ENCODE measurements at regions of chr11 and their contacts with region 1.

Region 1: GRCh38 chr11:63838678-63839507 is at the start of gene MARK2:
- DNase-seq: peak; percentile 99 to 100 (median 99)
- ATAC-seq: peak; percentile 93
- H3K4me3 ChIP-seq: peak within 1 kb of the TSS; percentile 87
- H3K4me3 Mint-ChIP-seq: peak within 1 kb of the TSS; percentile 86 to 99 (median 92)
- H3K27ac ChIP-seq: peak within 1 kb of the TSS; percentile 94
- H3K27ac Mint-ChIP-seq: peak within 1 kb of the TSS; percentile 74 to 97 (median 88)
- H3K4me1 ChIP-seq: peaks cover 32 to 35% of the 10 kb centered on the region in 2 donors
- H3K4me1 Mint-ChIP-seq: peaks cover 44 to 57% (median 54%) of the 10 kb centered on the region in 7 donors
- H3K27me3 ChIP-seq: no peaks in the 10 kb centered on the region
- H3K27me3 Mint-ChIP-seq: no peaks in the 10 kb centered on the region
- total RNA-seq, gene MARK2: 42.3 to 69.1 (median 56.8) TPM

Region 2: GRCh38 chr11:61967116-61967923 is 1871.6 kb before region 1 on chr11 and contains the start of gene FTH1:
- CTCF ChIA-PET with region 1: no interaction called
- POLR2A ChIA-PET with region 1: no interaction called
- intact Hi-C with region 1: loop called in 1 of 2 experiments (anchors 5 kb)
- DNase-seq: peak; percentile 87 to 96 (median 92)
- ATAC-seq: peak; percentile 81
- H3K4me3 ChIP-seq: peak within 1 kb of the TSS; percentile 91
- H3K4me3 Mint-ChIP-seq: peak within 1 kb of the TSS; percentile 90 to 98 (median 94)
- H3K27ac ChIP-seq: peak within 1 kb of the TSS; percentile 87
- H3K27ac Mint-ChIP-seq: peak within 1 kb of the TSS; percentile 91 to 99 (median 97)
- H3K4me1 ChIP-seq: peaks cover 18 to 38% of the 10 kb centered on the region in 2 donors
- H3K4me1 Mint-ChIP-seq: peaks cover 45 to 78% (median 72%) of the 10 kb centered on the region in 7 donors
- H3K27me3 ChIP-seq: no peaks in the 10 kb centered on the region
- H3K27me3 Mint-ChIP-seq: no peaks in the 10 kb centered on the region
- total RNA-seq, gene FTH1: 684 to 3,858 (median 993) TPM

Region 3: GRCh38 chr11:63813035-63813562 is 25.8 kb before region 1 on chr11 and contains the start of gene SPINDOC:
- CTCF ChIA-PET with region 1: no interaction called
- POLR2A ChIA-PET with region 1: no interaction called
- intact Hi-C with region 1: loop called (anchors 1 to 2 kb)
- DNase-seq: peak; percentile 17 to 90 (median 36)
- ATAC-seq: peak; percentile 94
- H3K4me3 ChIP-seq: peak within 1 kb of the TSS; percentile 65
- H3K4me3 Mint-ChIP-seq: peak within 1 kb of the TSS; percentile 71 to 86 (median 80)
- H3K27ac ChIP-seq: peak within 1 kb of the TSS; percentile 69
- H3K27ac Mint-ChIP-seq: peak within 1 kb of the TSS in 7 of 9 donors; percentile 5 to 63 (median 29)
- H3K4me1 ChIP-seq: peaks cover 4 to 6% of the 10 kb centered on the region in 2 donors
- H3K4me1 Mint-ChIP-seq: peaks cover 6 to 32% (median 21%) of the 10 kb centered on the region in 7 donors
- H3K27me3 ChIP-seq: no peaks in the 10 kb centered on the region
- H3K27me3 Mint-ChIP-seq: no peaks in the 10 kb centered on the region
- total RNA-seq, gene SPINDOC: 6.6 to 42.2 (median 9.3) TPM

Region 4: GRCh38 chr11:63888170-63889086 is 49.5 kb after region 1 on chr11:
- CTCF ChIA-PET with region 1: interaction called, 18 read pairs
- POLR2A ChIA-PET with region 1: interaction called, 24 read pairs
- intact Hi-C with region 1: loop called (anchors 1 kb)
- DNase-seq: peak; percentile 30 to 75 (median 72)
- ATAC-seq: peak; percentile 89
- H3K4me3 ChIP-seq: peak overlapping the region; percentile 80
- H3K4me3 Mint-ChIP-seq: peak overlapping the region; percentile 89 to 98 (median 95)
- H3K27ac ChIP-seq: peak overlapping the region; percentile 78
- H3K27ac Mint-ChIP-seq: peak overlapping the region; percentile 85 to 98 (median 94)
- H3K4me1 ChIP-seq: peaks cover 49 to 65% of the 10 kb centered on the region in 2 donors
- H3K4me1 Mint-ChIP-seq: peaks cover 58 to 86% (median 82%) of the 10 kb centered on the region in 7 donors
- H3K27me3 ChIP-seq: no peaks in the 10 kb centered on the region
- H3K27me3 Mint-ChIP-seq: no peaks in the 10 kb centered on the region

Region 5: GRCh38 chr11:63945477-63946163 is 106.7 kb after region 1 on chr11:
- CTCF ChIA-PET with region 1: interaction called, 148 read pairs
- POLR2A ChIA-PET with region 1: interaction called, 32 read pairs
- intact Hi-C with region 1: loop called (anchors 1 kb)
- DNase-seq: peak in 8 of 9 donors; percentile 33 to 57 (median 48)
- ATAC-seq: peak; percentile 84
- H3K4me3 ChIP-seq: no peak overlapping the region
- H3K4me3 Mint-ChIP-seq: no peak overlapping the region
- H3K27ac ChIP-seq: no peak overlapping the region
- H3K27ac Mint-ChIP-seq: peak overlapping the region in 1 of 9 donors; percentile 23
- H3K4me1 ChIP-seq: no peaks in the 10 kb centered on the region
- H3K4me1 Mint-ChIP-seq: peaks cover 7 to 22% (median 11%) of the 10 kb centered on the region in 7 donors
- H3K27me3 ChIP-seq: no peaks in the 10 kb centered on the region
- H3K27me3 Mint-ChIP-seq: no peaks in the 10 kb centered on the region

Region 6: DNA sequence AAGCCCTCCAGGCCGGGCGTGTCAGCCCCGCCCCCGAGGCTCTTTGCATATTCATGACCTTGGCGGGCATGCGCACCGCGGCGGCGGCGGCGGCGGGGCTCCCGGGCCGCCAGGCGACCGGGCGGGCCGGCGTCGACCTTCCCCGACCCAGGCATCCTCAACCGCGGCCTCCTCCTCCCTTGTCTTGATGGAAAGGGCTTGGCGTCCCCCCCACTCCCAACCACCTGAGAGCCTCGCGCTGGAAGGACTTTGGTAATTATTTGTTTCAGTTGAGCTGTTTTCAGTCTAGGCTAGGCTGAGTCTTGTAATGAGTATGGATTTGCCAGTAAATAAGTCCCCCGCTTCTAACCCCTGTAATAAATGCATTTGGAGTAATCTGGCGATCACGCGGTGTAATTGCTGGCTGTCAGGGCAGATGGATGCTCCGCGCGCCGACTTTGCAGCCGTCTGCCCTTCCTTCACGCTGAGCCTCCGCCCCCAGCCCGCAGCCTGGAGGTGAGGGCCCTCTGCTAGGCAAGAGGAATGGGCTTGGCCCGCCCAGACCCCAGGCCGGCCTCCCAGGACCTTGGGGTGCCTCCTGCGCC is 222.1 kb after region 1 on chr11:
- CTCF ChIA-PET with region 1: no interaction called
- POLR2A ChIA-PET with region 1: no interaction called
- intact Hi-C with region 1: no loop called
- DNase-seq: peak in 8 of 9 donors; percentile 22 to 71 (median 30)
- ATAC-seq: peak; percentile 75
- H3K4me3 ChIP-seq: peak overlapping the region; percentile 47
- H3K4me3 Mint-ChIP-seq: peak overlapping the region; percentile 67 to 89 (median 84)
- H3K27ac ChIP-seq: no peak overlapping the region
- H3K27ac Mint-ChIP-seq: no peak overlapping the region
- H3K4me1 ChIP-seq: peaks cover 0 to 4% of the 10 kb centered on the region in 2 donors
- H3K4me1 Mint-ChIP-seq: peaks cover 0 to 12% (median 8%) of the 10 kb centered on the region in 7 donors
- H3K27me3 ChIP-seq: no peaks in the 10 kb centered on the region
- H3K27me3 Mint-ChIP-seq: peaks cover 6 to 32% (median 22%) of the 10 kb centered on the region in 5 donors

Region 7: DNA sequence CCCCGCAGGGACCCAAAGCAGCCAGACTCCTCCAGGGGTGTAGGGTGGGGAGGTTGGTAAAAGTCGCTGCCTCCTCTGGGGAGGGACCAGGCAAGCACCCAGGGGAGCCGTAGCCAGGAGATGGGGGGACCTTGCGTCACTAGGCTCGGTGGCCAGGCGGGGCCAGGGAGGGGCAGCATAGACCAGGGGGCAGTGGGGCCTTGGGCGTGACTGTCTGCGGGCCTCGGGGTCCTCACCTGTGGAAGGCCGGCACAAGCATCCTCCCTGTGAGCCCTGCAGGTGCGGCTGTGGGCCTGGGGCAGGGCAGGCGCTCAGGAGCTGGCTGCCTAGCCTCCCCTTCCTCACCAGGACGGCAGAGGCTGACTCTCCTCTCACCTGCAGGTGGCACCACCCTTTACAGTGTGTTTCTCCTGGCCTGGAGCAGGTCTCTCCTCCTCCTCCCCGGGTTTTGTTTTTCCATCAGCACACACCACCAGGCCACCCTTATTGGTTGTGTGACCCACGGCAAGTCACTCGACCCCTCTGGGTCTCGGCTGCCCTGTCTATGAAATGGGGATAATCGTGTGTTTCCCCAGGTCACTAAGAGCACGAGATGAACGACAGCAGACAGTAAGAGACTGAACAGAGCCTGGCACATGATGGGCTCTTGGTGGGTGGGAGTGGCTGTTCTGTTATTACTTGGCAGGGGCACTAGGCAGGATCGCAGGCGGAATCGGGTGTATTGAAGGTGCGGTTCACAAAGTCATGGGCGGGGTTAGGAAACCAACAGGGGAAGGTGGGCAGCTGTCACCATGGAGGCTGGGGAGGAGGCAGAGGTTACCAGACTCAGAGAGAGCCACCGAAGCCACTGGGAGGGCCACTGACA is 249.5 kb after region 1 on chr11:
- CTCF ChIA-PET with region 1: no interaction called
- POLR2A ChIA-PET with region 1: no interaction called
- intact Hi-C with region 1: no loop called
- DNase-seq: no peak
- ATAC-seq: no peak
- H3K4me3 ChIP-seq: no peak overlapping the region
- H3K4me3 Mint-ChIP-seq: no peak overlapping the region
- H3K27ac ChIP-seq: no peak overlapping the region
- H3K27ac Mint-ChIP-seq: no peak overlapping the region
- H3K4me1 ChIP-seq: no peaks in the 10 kb centered on the region
- H3K4me1 Mint-ChIP-seq: peaks cover 0 to 2% (median 0%) of the 10 kb centered on the region in 7 donors
- H3K27me3 ChIP-seq: no peaks in the 10 kb centered on the region
- H3K27me3 Mint-ChIP-seq: peaks cover 0 to 4% (median 0%) of the 10 kb centered on the region in 5 donors

Region 8: GRCh38 chr11:64152841-64153691 is 314.2 kb after region 1 on chr11:
- CTCF ChIA-PET with region 1: interaction called, 13 read pairs
- POLR2A ChIA-PET with region 1: no interaction called
- intact Hi-C with region 1: loop called (anchors 1 kb)
- DNase-seq: peak; percentile 40 to 84 (median 62)
- ATAC-seq: peak; percentile 95
- H3K4me3 ChIP-seq: no peak overlapping the region
- H3K4me3 Mint-ChIP-seq: no peak overlapping the region
- H3K27ac ChIP-seq: no peak overlapping the region
- H3K27ac Mint-ChIP-seq: no peak overlapping the region
- H3K4me1 ChIP-seq: no peaks in the 10 kb centered on the region
- H3K4me1 Mint-ChIP-seq: peaks cover 0 to 11% (median 3%) of the 10 kb centered on the region in 7 donors
- H3K27me3 ChIP-seq: no peaks in the 10 kb centered on the region
- H3K27me3 Mint-ChIP-seq: peaks cover 0 to 5% (median 0%) of the 10 kb centered on the region in 5 donors

Region 9: GRCh38 chr11:64317957-64318693 is 479.2 kb after region 1 on chr11 and contains the start of gene PRDX5:
- CTCF ChIA-PET with region 1: no interaction called
- POLR2A ChIA-PET with region 1: no interaction called
- intact Hi-C with region 1: loop called in 1 of 2 experiments (anchors 2 kb)
- DNase-seq: peak; percentile 93 to 97 (median 96)
- ATAC-seq: peak; percentile 87
- H3K4me3 ChIP-seq: peak within 1 kb of the TSS; percentile 60
- H3K4me3 Mint-ChIP-seq: peak within 1 kb of the TSS; percentile 85 to 99 (median 96)
- H3K27ac ChIP-seq: peak within 1 kb of the TSS; percentile 92
- H3K27ac Mint-ChIP-seq: peak within 1 kb of the TSS; percentile 97 to 100 (median 100)
- H3K4me1 ChIP-seq: peaks cover 7 to 10% of the 10 kb centered on the region in 2 donors
- H3K4me1 Mint-ChIP-seq: peaks cover 20 to 40% (median 28%) of the 10 kb centered on the region in 7 donors
- H3K27me3 ChIP-seq: no peaks in the 10 kb centered on the region
- H3K27me3 Mint-ChIP-seq: no peaks in the 10 kb centered on the region
- total RNA-seq, gene PRDX5: 41.4 to 99.2 (median 55.2) TPM

Region 10: GRCh38 chr11:64369440-64370211 is 530.7 kb after region 1 on chr11:
- CTCF ChIA-PET with region 1: no interaction called
- POLR2A ChIA-PET with region 1: no interaction called
- intact Hi-C with region 1: no loop called
- DNase-seq: no peak
- ATAC-seq: no peak
- H3K4me3 ChIP-seq: no peak overlapping the region
- H3K4me3 Mint-ChIP-seq: no peak overlapping the region
- H3K27ac ChIP-seq: no peak overlapping the region
- H3K27ac Mint-ChIP-seq: peak overlapping the region in 1 of 9 donors; percentile 36
- H3K4me1 ChIP-seq: no peaks in the 10 kb centered on the region
- H3K4me1 Mint-ChIP-seq: peaks cover 0 to 7% (median 0%) of the 10 kb centered on the region in 7 donors
- H3K27me3 ChIP-seq: no peaks in the 10 kb centered on the region
- H3K27me3 Mint-ChIP-seq: no peaks in the 10 kb centered on the region